ENCODE measurements at regions of chr5 and their contacts with region 1.

Region 1: GRCh38 chr5:141475625-141476131 is at the start of gene PCDHGC3:
- DNase-seq: peak; percentile 88 to 94
- ATAC-seq: peak; percentile 96 to 99 (median 99)
- H3K4me3 ChIP-seq: peak within 1 kb of the TSS; percentile 51 to 80 (median 62)
- H3K27ac ChIP-seq: peak within 1 kb of the TSS; percentile 67 to 93 (median 87)
- H3K4me1 ChIP-seq: peaks cover 7 to 55% (median 43%) of the 10 kb centered on the region in 9 donors
- H3K27me3 ChIP-seq: peaks cover 0 to 51% (median 0%) of the 10 kb centered on the region in 7 donors
- CTCF ChIP-seq: peak in 6 of 9 donors; percentile 52 to 68 (median 60)
- total RNA-seq, gene PCDHGC3: 12.8 to 19.5 (median 15.9) TPM

Region 2: GRCh38 chr5:141439411-141440141 is 36.1 kb before region 1 on chr5:
- intact Hi-C with region 1: loop called in 1 of 10 experiments (anchors 5 kb)
- DNase-seq: no peak
- ATAC-seq: peak in 3 of 8 donors; percentile 26 to 70 (median 68)
- H3K4me3 ChIP-seq: no peak overlapping the region
- H3K27ac ChIP-seq: no peak overlapping the region
- H3K4me1 ChIP-seq: peaks cover 0 to 16% (median 0%) of the 10 kb centered on the region in 9 donors
- H3K27me3 ChIP-seq: no peaks in the 10 kb centered on the region
- CTCF ChIP-seq: no peak

Region 3: DNA sequence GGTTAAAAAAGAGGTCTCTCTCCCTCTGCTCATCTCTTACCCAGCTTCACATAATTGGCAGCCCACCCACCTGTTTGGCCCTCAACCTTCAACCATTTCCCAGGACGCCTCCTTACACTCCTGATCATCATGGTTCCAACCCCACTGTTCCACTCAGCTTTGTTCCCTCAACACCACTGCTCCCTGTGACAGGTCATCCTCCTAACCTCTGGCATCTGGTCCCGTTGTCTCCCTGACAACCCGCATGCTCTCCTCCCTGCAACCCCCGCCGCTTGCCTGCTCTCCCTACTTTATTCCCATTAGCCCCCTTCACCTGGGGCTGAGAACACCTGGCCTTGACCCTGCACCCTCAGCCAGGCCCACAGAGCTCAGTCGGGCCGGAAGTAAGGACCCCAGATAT is 26.1 kb after region 1 on chr5:
- intact Hi-C with region 1: no loop called
- DNase-seq: no peak
- ATAC-seq: no peak
- H3K4me3 ChIP-seq: no peak overlapping the region
- H3K27ac ChIP-seq: no peak overlapping the region
- H3K4me1 ChIP-seq: peaks cover under 1 to 8% (median 5%) of the 10 kb centered on the region in 9 donors
- H3K27me3 ChIP-seq: no peaks in the 10 kb centered on the region
- CTCF ChIP-seq: no peak

Region 4: GRCh38 chr5:141512390-141512910 is 36.8 kb after region 1 on chr5:
- intact Hi-C with region 1: loop called in 2 of 10 experiments (anchors 5 kb)
- DNase-seq: peak; percentile 83 to 85
- ATAC-seq: peak; percentile 3 to 33 (median 27)
- H3K4me3 ChIP-seq: peak overlapping the region; percentile 12 to 68 (median 56)
- H3K27ac ChIP-seq: peak overlapping the region in 9 of 10 donors; percentile 82 to 95 (median 86)
- H3K4me1 ChIP-seq: peaks cover 26 to 85% (median 69%) of the 10 kb centered on the region in 9 donors
- H3K27me3 ChIP-seq: no peaks in the 10 kb centered on the region
- CTCF ChIP-seq: peak; percentile 76 to 91 (median 84)

Measured in heart right ventricle (tissue), 16 donors.